ENCODE measurements at regions of chrX and their contacts with region 1.

Region 1: GRCh38 chrX:12946838-12947544 is 27.9 kb upstream of the TMSB4X start:
- DNase-seq: peak; percentile 87 to 94
- H3K4me3 ChIP-seq: peak overlapping the region; percentile 40; the same call in 1 of the 2 replicates
- H3K27ac ChIP-seq: peak overlapping the region; percentile 98
- H3K4me1 ChIP-seq: peaks cover 35% of the 10 kb centered on the region
- H3K27me3 ChIP-seq: no peaks in the 10 kb centered on the region
- CTCF ChIP-seq: peak; percentile 93

Region 2: DNA sequence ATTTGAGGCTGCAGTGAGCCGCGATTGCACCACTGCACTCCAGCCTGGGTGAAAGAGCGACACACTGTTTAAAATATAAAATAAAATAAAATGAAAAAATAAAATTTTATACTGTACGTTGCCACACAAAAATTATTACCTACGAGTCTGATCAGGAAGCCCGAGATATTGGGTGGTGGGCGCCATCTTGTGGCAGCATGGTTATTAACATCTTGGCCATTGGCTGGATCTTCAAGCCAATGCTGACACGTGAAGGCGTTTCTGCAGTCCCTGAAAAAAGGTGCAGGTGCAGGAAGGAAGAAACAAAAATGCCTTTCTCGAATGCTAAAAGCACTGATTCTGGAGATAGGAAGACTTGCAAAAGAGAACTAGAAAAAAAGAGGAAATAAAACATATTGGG is 45.5 kb before region 1 on chrX:
- CTCF ChIA-PET with region 1: no interaction called
- POLR2A ChIA-PET with region 1: no interaction called
- intact Hi-C with region 1: loop called (anchors 5 kb)
- DNase-seq: peak; percentile 52 to 57
- H3K4me3 ChIP-seq: no peak overlapping the region
- H3K27ac ChIP-seq: no peak overlapping the region
- H3K4me1 ChIP-seq: no peaks in the 10 kb centered on the region
- H3K27me3 ChIP-seq: no peaks in the 10 kb centered on the region
- CTCF ChIP-seq: peak; percentile 73

Region 3: GRCh38 chrX:13059637-13060499 is 112.9 kb after region 1 on chrX:
- CTCF ChIA-PET with region 1: no interaction called
- POLR2A ChIA-PET with region 1: no interaction called
- intact Hi-C with region 1: loop called (anchors 1 kb)
- DNase-seq: peak; percentile 43 to 84
- H3K4me3 ChIP-seq: no peak overlapping the region
- H3K27ac ChIP-seq: peak overlapping the region; percentile 80
- H3K4me1 ChIP-seq: peaks cover 29% of the 10 kb centered on the region
- H3K27me3 ChIP-seq: no peaks in the 10 kb centered on the region
- CTCF ChIP-seq: no peak

Region 4: DNA sequence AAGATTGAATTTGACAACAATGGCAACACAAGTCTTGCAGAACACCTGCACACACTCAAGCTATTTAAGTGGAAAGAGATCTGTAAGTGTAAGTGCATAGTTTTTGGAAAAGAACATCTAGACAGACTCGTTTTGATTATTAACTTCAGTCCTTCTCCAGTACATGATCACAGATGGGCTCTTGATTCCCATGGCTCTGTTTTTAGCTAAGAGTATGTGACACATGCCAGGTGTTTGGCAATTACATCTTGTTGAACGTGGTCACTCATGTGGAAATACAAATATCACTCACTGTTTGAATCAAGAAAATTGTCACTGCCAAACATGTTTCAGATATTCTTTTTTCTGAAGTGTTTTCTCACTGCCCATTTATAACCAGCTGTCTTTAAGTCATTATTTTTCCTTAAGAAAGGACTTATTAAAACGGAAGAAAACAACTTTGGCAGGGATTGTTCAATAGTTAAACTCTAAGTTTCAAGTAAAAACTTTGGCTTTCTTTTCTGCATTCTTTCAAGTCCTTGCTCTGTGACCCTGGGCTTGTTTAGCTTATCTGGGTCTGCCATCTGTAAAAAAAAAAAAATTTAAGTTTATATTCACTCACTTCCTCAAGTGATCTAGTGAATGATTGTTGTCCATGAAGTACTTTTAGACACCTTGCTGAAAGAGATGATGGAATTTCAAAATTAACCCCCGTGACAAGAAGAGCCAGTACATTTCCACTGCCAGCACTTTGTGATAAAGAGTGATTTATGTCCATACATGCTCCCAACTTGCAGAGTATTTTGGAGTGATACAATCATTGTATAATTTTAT is 247.5 kb after region 1 on chrX:
- CTCF ChIA-PET with region 1: interaction called, 4 read pairs
- POLR2A ChIA-PET with region 1: interaction called, 18 read pairs
- intact Hi-C with region 1: loop called (anchors 1 kb)
- DNase-seq: peak in 1 of 2 experiments; percentile 90
- H3K4me3 ChIP-seq: peak overlapping the region; percentile 8; the same call in 1 of the 2 replicates
- H3K27ac ChIP-seq: peak overlapping the region; percentile 93
- H3K4me1 ChIP-seq: peaks cover 74% of the 10 kb centered on the region
- H3K27me3 ChIP-seq: no peaks in the 10 kb centered on the region
- CTCF ChIP-seq: no peak